ENCODE measurements at regions of chr2 and their contacts with region 1.

Region 1: DNA sequence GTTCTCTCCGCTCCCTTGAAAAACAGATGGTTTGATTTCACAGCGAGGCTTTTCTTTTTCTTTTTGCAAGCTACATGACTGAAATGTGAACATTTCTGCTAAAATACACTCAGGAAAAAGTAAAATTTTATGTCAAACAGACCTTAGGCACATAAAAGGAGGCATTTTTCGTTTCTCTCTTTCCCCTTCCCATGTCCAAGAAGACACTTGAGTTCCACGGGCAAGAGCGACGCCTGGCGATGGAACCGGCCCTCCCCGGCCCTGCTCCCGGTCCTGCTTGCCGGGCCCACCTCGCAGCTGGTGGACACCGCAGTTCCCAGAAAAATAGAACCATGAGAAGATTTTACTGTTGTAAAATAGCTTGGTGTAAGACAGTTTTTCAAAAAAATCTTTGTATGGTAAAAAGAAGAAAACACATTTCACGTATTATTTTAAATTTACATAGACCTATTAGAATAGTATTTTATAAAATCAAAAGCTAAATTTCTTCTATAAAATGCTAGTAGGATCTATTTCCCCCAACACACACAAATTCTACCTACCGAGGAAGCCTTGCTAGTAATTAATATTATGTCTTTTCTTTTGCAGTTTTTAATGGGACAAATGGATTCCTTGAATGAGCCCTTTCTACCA is 2.3 kb upstream of the ALKAL2 start:
- DNase-seq: no peak
- ATAC-seq: peak; percentile 88

Region 2: GRCh38 chr2:175880-176800 is 114.1 kb before region 1 on chr2:
- intact Hi-C with region 1: loop called (anchors 2 kb)
- DNase-seq: no peak
- ATAC-seq: no peak

Region 3: DNA sequence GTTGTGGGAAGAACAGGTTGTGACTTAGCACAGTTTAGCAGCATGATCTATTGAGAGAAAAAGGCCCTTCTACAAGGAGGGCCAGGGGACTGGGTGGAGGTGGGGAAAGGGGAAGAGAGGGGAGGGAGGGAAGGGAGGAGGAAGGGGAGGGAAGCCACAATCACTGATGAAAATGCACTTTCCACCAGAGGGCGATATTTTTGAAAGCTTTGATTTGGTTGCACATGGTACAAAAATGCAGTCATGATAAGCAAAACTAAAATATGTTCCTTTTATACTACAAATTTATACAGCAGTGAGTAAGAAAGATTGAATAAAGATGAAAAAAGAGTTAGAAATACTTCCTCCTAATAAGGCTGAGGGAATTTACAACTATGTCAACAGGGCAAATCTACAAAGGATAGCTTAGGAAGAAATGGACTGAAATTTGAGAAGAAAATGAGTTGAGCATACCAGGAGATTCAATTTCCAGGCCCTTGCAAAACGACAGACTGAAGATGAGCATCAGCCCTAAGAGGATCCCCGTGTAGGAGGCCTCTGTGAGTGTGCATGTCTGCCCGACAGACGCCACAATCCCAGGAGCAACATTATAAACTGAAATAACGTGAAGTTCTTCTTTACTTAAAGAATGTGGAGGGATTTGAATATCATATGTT is 43.6 kb before region 1 on chr2:
- intact Hi-C with region 1: loop called (anchors 2 kb)
- DNase-seq: no peak
- ATAC-seq: no peak

Measured in Right ventricle myocardium inferior (tissue), 1 donor.